A673 (cell line): ENCODE measurements at regions of chr15 and their contacts with region 1.

Region 1: GRCh38 chr15:63891079-63891767 is 57.5 kb upstream of the HERC1 start:
- DNase-seq: peak; percentile 87
- H3K4me3 ChIP-seq: no peak overlapping the region
- H3K27ac ChIP-seq: no peak overlapping the region
- H3K4me1 ChIP-seq: no peaks in the 10 kb centered on the region
- H3K27me3 ChIP-seq: no peaks in the 10 kb centered on the region
- CTCF ChIP-seq: peak; percentile 96

Region 2: DNA sequence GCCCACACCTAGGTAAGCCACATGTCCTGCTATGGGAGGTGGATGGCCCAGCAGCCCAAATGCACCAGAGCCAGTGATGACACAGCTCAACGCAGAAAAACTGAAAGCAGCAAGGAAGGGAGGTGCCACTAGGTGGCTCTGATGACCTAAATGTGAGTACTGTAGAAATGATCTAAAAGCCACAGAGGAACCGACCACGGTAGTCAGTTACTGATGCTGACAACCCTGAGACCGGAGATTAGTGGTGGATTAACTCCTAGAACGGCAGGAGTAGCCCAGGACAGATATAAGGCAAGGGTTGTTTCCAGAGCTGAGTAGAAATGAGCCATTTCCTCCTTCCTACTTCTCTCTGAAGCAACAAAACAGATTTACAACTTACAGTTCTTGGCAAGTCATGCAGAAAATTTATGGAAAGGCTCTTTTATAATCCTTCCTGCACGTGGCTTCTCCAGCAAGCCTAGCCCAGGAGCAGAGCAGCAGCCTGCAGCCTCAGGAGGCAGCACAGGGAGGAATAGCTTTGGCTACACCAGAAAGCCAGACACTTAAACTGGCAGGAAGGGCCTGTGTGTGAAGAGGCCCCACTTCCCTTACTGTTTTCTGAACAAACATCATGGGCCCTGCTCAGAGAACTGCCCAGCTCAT is 280.9 kb before region 1 on chr15:
- CTCF ChIA-PET with region 1: interaction called, 4 read pairs
- POLR2A ChIA-PET with region 1: no interaction called
- intact Hi-C with region 1: loop called (anchors 2 kb)
- DNase-seq: peak; percentile 98
- H3K4me3 ChIP-seq: no peak overlapping the region
- H3K27ac ChIP-seq: peak overlapping the region; percentile 91
- H3K4me1 ChIP-seq: peaks cover 26% of the 10 kb centered on the region
- H3K27me3 ChIP-seq: no peaks in the 10 kb centered on the region
- CTCF ChIP-seq: peak; percentile 90

Region 3: GRCh38 chr15:63752075-63752684 is 139.0 kb before region 1 on chr15:
- CTCF ChIA-PET with region 1: interaction called, 4 read pairs
- POLR2A ChIA-PET with region 1: no interaction called
- intact Hi-C with region 1: loop called (anchors 1 kb)
- DNase-seq: peak; percentile 76
- H3K4me3 ChIP-seq: no peak overlapping the region
- H3K27ac ChIP-seq: no peak overlapping the region
- H3K4me1 ChIP-seq: no peaks in the 10 kb centered on the region
- H3K27me3 ChIP-seq: no peaks in the 10 kb centered on the region
- CTCF ChIP-seq: peak; percentile 79

Region 4: GRCh38 chr15:64105113-64105704 is 214.0 kb after region 1 on chr15:
- CTCF ChIA-PET with region 1: no interaction called
- POLR2A ChIA-PET with region 1: interaction called, 11 read pairs
- intact Hi-C with region 1: no loop called
- DNase-seq: peak; percentile 78
- H3K4me3 ChIP-seq: no peak overlapping the region
- H3K27ac ChIP-seq: no peak overlapping the region
- H3K4me1 ChIP-seq: peaks cover 14% of the 10 kb centered on the region
- H3K27me3 ChIP-seq: no peaks in the 10 kb centered on the region
- CTCF ChIP-seq: no peak